Activated CD4-positive, alpha-beta T cell treated with anti-CD3 and anti-CD28 coated beads for 36 hours (primary cell): ENCODE measurements at regions of chr11 and their contacts with region 1.

Region 1: GRCh38 chr11:66051766-66052663 is at the start of gene SF3B2:
- DNase-seq: peak; percentile 99
- ATAC-seq: peak; percentile 99
- H3K4me3 Mint-ChIP-seq: peak within 1 kb of the TSS; percentile 91
- H3K27ac Mint-ChIP-seq: peak within 1 kb of the TSS; percentile 95
- H3K4me1 Mint-ChIP-seq: peaks cover 36% of the 10 kb centered on the region
- H3K27me3 Mint-ChIP-seq: peaks cover 4% of the 10 kb centered on the region
- total RNA-seq, gene SF3B2: 265 to 270 TPM

Region 2: DNA sequence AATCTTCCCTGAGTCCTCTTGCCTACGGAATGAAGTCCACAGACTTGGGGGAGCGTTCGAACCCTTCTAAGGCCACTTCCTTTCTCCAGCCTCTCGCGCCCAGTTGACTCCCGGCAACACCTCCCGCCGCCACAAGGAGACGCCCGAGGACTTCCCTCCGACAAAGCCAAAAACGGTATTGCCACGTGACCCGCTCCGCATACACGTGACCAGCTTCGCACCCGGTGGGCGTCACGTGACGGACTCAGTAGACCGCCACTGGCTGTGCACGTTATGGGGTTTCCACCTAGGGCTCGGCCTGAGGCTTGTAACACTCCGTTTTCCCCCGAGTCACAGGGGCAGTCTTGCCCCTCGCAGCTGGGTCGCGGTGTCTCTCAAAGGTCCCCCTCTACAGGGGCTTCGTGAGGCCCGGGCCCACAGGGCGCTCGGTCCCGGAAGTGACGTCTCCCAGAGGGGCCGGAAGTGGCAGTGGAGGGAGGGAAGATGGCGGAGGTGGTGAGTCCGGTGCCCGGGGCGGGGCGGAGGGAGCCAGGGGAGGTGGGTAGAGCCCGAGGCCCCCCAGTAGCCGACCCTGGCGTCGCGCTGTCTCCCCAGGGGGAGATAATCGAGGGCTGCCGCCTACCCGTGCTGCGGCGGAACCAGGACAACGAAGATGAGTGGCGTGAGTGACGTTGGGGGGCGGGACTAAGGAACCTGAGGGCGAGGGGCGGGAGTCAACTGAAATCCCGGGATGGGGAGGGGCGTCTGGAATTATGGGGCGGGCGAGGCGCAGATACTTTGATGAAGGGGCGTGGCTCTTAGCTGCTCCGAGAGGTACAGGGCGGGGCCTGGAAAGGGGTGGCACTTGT is 340.0 kb before region 1 on chr11 and contains the start of gene KAT5:
- CTCF ChIA-PET with region 1: interaction called, 5 read pairs
- POLR2A ChIA-PET with region 1: no interaction called
- intact Hi-C with region 1: loop called in 1 of 2 experiments (anchors 1 kb)
- DNase-seq: peak; percentile 99
- ATAC-seq: peak; percentile 86
- H3K4me3 Mint-ChIP-seq: peak within 1 kb of the TSS; percentile 90
- H3K27ac Mint-ChIP-seq: peak within 1 kb of the TSS; percentile 96
- H3K4me1 Mint-ChIP-seq: peaks cover 27% of the 10 kb centered on the region
- H3K27me3 Mint-ChIP-seq: no peaks in the 10 kb centered on the region
- total RNA-seq, gene KAT5: 56.5 to 65.1 TPM

Region 3: DNA sequence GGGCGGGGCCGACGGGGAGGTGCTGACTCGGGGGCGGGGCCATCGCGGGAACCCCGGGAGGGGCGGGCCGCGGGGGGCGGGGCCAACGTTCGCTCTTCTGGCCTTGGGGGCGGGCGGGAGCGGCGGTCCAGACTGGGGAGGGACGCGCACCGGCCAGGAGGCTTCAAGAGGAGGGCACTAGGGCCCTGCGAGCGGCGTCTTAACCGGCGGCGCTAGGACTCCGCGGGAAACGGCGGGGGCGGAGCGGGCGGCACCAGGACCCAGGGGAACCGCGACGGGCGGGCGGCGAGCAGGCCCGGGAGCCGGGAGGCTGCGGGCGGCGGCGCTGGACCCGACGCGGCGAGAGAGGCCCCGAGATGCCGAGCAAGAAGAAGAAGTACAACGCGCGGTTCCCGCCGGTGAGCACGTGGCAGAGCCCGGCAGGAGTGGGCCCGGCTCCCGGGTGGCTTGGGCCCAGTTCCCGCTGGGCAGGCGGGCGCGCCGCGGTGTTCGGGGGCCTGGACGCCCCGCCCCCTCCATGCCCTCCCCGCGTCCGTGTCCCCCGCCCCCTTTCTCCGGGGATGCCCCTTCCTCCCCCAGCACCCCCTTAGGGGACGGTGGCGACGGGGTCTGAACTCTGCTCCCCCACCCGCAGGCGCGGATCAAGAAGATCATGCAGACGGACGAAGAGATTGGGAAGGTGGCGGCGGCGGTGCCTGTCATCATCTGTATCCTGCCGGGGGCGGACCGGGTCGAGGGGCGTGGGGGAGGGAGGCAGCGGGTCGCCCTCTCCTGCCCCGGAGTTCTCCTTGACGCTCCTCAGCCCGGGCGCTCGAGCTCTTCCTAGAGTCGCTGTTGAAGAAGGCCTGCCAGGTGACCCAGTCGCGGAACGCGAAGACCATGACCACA is 132.6 kb before region 1 on chr11 and contains the start of gene DRAP1:
- CTCF ChIA-PET with region 1: interaction called, 4 read pairs
- POLR2A ChIA-PET with region 1: no interaction called
- intact Hi-C with region 1: loop called in 1 of 2 experiments (anchors 1 kb)
- DNase-seq: peak; percentile 100
- ATAC-seq: peak; percentile 94
- H3K4me3 Mint-ChIP-seq: peak within 1 kb of the TSS; percentile 91
- H3K27ac Mint-ChIP-seq: peak within 1 kb of the TSS; percentile 88
- H3K4me1 Mint-ChIP-seq: peaks cover 35% of the 10 kb centered on the region
- H3K27me3 Mint-ChIP-seq: no peaks in the 10 kb centered on the region
- total RNA-seq, gene DRAP1: 111 to 158 TPM

Region 4: DNA sequence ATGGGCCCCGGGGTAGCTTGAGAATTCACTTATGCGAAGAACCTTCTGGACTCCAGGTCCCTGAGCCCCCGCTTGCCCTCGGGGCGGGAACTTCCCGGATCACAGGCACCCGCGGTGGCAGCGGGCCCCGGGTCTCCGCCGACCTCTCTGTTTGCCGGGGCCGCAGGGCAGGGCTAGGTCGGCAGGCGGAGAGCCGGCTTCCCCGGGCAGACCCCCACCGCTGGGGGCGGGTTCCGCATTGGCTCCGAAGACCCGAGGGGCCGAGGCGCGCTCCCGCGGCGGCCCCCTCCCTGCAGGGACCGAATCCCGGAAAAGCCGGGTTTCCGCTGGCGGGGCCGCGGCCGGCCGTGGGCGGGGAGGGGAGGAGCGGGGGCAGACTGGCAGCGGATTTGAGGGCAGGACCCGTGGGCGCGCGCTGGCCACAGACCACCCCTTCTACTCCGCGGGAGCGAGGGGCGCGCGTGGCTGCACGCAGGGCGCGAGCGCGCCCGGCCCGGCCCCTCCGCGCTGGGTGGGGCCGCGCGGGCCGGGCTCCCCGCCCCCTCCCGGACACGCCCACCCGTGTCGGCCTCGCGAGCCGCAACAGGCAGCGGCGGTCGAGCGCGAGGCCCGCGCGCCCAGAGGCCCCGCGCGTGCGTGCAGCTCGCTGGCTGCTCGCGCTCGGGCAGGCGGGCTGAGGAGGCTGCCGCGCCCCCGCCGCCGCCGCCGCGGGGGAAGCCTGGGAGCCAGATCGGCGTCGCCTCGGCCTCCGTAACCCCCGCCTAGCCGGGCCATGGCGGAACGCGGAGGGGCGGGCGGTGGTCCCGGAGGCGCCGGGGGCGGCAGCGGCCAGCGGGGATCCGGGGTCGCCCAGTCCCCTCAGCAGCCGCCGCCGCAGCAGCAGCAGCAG is 17.9 kb after region 1 on chr11 and contains the start of gene PACS1:
- CTCF ChIA-PET with region 1: interaction called, 63 read pairs
- POLR2A ChIA-PET with region 1: interaction called, 3 read pairs
- intact Hi-C with region 1: loop called (anchors 1 to 2 kb)
- DNase-seq: peak; percentile 83
- ATAC-seq: peak; percentile 48
- H3K4me3 Mint-ChIP-seq: peak within 1 kb of the TSS; percentile 98
- H3K27ac Mint-ChIP-seq: peak within 1 kb of the TSS; percentile 99
- H3K4me1 Mint-ChIP-seq: peaks cover 66% of the 10 kb centered on the region
- H3K27me3 Mint-ChIP-seq: no peaks in the 10 kb centered on the region
- total RNA-seq, gene PACS1: 76.6 to 90.7 TPM

Region 5: DNA sequence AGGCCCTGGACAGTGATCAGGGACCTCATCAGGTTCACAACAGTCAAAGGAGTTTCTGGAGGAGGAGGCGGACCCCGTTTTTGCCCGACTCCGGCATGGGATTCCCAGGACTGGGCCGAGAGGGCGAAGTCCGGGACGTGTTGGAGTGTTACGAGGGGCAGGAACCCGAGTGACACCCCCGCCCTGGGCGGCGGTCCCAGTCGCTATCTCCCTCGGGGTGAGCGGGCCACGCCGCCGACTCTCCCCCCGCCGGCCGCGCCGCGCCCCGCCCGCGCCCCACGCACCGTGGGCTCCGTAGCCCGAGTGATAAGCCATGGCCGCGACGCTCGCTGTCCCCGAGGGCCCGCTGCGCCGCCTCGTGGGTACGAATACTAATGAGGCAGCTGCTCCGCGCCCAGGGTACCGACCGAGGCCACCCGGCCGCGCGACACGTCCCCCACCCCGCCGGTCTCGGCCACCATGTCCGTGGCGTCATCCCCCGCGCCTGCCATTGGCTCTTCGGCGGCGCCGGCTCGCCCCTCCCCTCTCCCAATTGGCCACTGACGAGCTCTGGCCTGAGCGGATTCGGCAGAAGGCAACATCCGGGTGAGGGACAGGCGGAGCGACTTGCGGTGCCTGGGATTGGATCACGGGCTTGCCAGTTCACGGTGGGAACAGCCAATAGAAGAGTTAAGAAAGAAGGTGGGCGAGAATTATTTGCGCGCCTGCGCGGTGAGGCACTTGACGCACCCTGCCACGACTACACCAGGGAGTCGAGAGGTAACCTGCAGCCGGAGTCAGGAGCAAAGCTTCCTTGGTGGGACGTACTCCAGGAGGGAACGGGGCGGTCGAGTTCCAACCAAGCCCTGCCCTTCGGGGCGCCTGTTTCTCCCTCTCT is 236.9 kb after region 1 on chr11 and contains the start of gene YIF1A:
- CTCF ChIA-PET with region 1: no interaction called
- POLR2A ChIA-PET with region 1: interaction called, 3 read pairs
- intact Hi-C with region 1: loop called in 1 of 2 experiments (anchors 1 kb)
- DNase-seq: peak; percentile 99
- ATAC-seq: peak; percentile 97
- H3K4me3 Mint-ChIP-seq: peak within 1 kb of the TSS; percentile 89
- H3K27ac Mint-ChIP-seq: peak within 1 kb of the TSS; percentile 85
- H3K4me1 Mint-ChIP-seq: peaks cover 22% of the 10 kb centered on the region
- H3K27me3 Mint-ChIP-seq: peaks cover 8% of the 10 kb centered on the region
- total RNA-seq, gene YIF1A: 47.5 to 49.8 TPM

Region 6: DNA sequence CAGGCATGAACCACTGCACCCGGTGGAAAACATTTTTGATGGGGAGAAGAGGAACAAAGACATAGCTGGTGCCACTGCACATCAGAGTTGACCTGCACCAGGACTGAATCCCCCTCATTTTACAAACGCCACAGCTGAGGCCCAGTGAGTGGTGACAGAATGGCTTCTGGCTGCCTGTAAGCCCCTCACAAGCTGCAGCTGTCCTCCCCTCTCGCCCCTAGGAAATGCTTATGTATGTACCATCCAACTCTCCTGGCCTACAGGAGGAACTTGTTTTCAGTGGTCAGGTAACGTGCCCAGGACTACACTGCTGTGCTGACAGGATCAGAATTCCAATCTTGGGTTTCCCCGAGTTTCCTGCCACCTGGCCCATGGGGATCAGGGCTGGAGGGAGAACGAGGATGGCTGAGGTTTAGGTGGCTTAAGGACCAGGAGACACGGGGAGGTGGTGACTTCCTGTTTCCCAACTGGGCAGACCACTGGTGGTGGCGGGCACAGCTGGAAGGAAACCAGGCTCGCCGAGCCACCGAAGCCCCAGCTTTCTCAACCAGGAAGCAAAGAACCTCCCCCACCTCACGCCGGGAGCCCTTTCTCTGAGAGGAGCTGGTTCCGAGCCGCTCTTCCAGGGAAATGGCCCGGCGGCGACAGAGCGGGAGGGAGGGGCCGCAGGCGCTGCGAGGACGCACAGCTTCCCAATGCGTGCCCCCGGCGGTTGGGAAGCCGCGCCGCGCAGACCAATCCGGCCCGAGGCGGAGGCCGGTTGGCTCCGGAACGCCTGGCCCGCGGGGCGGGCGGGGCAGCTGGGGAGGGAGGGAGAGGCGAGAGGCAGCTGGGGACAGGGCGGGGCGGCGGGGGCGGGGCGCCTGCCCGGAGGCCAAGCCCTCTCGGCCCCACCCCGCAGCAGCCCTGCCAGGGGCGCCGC is 803.8 kb after region 1 on chr11:
- CTCF ChIA-PET with region 1: no interaction called
- POLR2A ChIA-PET with region 1: no interaction called
- intact Hi-C with region 1: loop called in 1 of 2 experiments (anchors 5 kb)
- DNase-seq: peak; percentile 94
- ATAC-seq: peak; percentile 83
- H3K4me3 Mint-ChIP-seq: peak overlapping the region; percentile 82
- H3K27ac Mint-ChIP-seq: peak overlapping the region; percentile 73
- H3K4me1 Mint-ChIP-seq: peaks cover 11% of the 10 kb centered on the region
- H3K27me3 Mint-ChIP-seq: no peaks in the 10 kb centered on the region

Region 7: GRCh38 chr11:67120881-67121710 is 1069.1 kb after region 1 on chr11:
- CTCF ChIA-PET with region 1: no interaction called
- POLR2A ChIA-PET with region 1: no interaction called
- intact Hi-C with region 1: no loop called
- DNase-seq: peak; percentile 38
- ATAC-seq: no peak
- H3K4me3 Mint-ChIP-seq: peak overlapping the region; percentile 98
- H3K27ac Mint-ChIP-seq: peak overlapping the region; percentile 83
- H3K4me1 Mint-ChIP-seq: peaks cover 25% of the 10 kb centered on the region
- H3K27me3 Mint-ChIP-seq: no peaks in the 10 kb centered on the region